ENCODE measurements at regions of chr12 and their contacts with region 1.

Region 1: DNA sequence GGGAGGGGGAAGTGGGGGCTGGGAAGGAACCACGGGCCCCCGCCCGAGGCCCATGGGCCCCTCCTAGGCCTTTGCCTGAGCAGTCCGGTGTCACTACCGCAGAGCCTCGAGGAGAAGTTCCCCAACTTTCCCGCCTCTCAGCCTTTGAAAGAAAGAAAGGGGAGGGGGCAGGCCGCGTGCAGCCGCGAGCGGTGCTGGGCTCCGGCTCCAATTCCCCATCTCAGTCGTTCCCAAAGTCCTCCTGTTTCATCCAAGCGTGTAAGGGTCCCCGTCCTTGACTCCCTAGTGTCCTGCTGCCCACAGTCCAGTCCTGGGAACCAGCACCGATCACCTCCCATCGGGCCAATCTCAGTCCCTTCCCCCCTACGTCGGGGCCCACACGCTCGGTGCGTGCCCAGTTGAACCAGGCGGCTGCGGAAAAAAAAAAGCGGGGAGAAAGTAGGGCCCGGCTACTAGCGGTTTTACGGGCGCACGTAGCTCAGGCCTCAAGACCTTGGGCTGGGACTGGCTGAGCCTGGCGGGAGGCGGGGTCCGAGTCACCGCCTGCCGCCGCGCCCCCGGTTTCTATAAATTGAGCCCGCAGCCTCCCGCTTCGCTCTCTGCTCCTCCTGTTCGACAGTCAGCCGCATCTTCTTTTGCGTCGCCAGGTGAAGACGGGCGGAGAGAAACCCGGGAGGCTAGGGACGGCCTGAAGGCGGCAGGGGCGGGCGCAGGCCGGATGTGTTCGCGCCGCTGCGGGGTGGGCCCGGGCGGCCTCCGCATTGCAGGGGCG is at the start of gene GAPDH:
- DNase-seq: peak; percentile 87 to 91
- H3K4me3 ChIP-seq: peak within 1 kb of the TSS; percentile 83 to 98 (median 90)
- H3K27ac ChIP-seq: peak within 1 kb of the TSS; percentile 98
- H3K4me1 ChIP-seq: peaks cover 0 to 19% (median 16%) of the 10 kb centered on the region in 4 experiments; a peak in 6 of 7 replicates
- H3K27me3 ChIP-seq: no peaks in the 10 kb centered on the region
- CTCF ChIP-seq: no peak; a peak in 1 of 4 replicates
- EP300 ChIP-seq: peak in 1 of 2 experiments; percentile 7; a peak in 1 of 3 replicates
- POLR2A ChIP-seq: peak in 1 of 2 experiments; percentile 85; a peak in 1 of 3 replicates
- RAD21 ChIP-seq: no peak
- total RNA-seq, gene GAPDH: 5,175 and 5,215 TPM in 2 replicates

Region 2: GRCh38 chr12:6423267-6424007 is 110.7 kb before region 1 on chr12:
- CTCF ChIA-PET with region 1: interaction called, 15 read pairs
- POLR2A ChIA-PET with region 1: interaction called, 38 read pairs
- DNase-seq: peak; percentile 70 to 77
- H3K4me3 ChIP-seq: no peak overlapping the region
- H3K27ac ChIP-seq: no peak overlapping the region
- H3K4me1 ChIP-seq: peaks cover 0 to 4% (median under 1%) of the 10 kb centered on the region in 4 experiments; a peak in 2 of 7 replicates
- H3K27me3 ChIP-seq: no peaks in the 10 kb centered on the region; a peak in 1 of 7 replicates
- CTCF ChIP-seq: peak; percentile 84 to 96 (median 95)
- EP300 ChIP-seq: no peak
- POLR2A ChIP-seq: no peak
- RAD21 ChIP-seq: peak; percentile 97 to 99

Region 3: DNA sequence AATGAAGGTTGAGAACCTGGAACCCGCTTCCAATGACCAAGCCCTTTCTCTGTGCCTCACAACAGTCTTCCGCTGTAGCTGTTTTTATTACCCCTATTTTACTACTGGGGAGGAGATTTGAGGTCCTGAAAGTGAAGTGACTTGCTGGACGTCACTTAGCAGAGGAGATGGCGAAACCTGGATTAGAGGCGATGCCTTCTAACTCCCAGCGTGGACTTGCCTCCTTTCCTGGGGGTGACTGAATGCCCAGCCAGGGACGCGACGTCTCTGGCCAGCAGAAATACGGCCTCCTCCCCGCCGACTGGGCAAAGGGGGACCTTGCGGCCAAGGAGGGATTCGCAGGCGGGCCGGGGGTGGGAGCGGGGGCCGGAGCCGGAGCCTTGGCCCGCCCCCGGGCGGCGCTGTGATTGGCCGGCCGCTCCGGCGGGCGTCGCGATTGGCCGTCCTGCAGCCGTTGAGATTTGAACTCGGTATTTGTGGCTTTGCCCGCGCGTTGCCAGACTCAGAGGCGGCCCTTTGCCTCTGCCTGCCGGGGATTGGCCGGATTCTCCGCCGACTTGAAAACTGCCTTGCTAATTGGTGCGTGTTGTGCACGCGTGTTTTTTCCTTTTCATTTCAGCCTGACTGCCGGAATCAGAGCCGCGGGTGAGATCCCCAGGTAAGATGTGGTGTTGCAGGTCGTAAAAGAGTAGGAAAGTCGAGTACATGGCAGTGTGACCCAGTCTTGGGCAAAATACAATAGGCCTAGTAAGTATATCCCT is 40.4 kb before region 1 on chr12 and contains the start of gene NCAPD2:
- CTCF ChIA-PET with region 1: interaction called, 6 read pairs
- POLR2A ChIA-PET with region 1: interaction called, 38 read pairs
- DNase-seq: peak; percentile 86 to 91
- H3K4me3 ChIP-seq: peak within 1 kb of the TSS; percentile 84 to 98 (median 90)
- H3K27ac ChIP-seq: peak within 1 kb of the TSS; percentile 81
- H3K4me1 ChIP-seq: peaks cover 0 to 6% (median 4%) of the 10 kb centered on the region in 4 experiments; a peak in 4 of 7 replicates
- H3K27me3 ChIP-seq: no peaks in the 10 kb centered on the region
- CTCF ChIP-seq: peak in 2 of 3 experiments; percentile 12 to 19; a peak in 2 of 4 replicates
- EP300 ChIP-seq: no peak
- POLR2A ChIP-seq: peak; percentile 72 to 76
- RAD21 ChIP-seq: no peak; a peak in 1 of 4 replicates
- total RNA-seq, gene NCAPD2: 129 and 132 TPM in 2 replicates

Region 4: GRCh38 chr12:6520186-6520585 is 13.9 kb before region 1 on chr12:
- CTCF ChIA-PET with region 1: interaction called, 43 read pairs
- POLR2A ChIA-PET with region 1: interaction called, 188 read pairs
- DNase-seq: no peak
- H3K4me3 ChIP-seq: no peak overlapping the region
- H3K27ac ChIP-seq: no peak overlapping the region
- H3K4me1 ChIP-seq: no peaks in the 10 kb centered on the region
- H3K27me3 ChIP-seq: no peaks in the 10 kb centered on the region
- CTCF ChIP-seq: no peak
- EP300 ChIP-seq: no peak
- POLR2A ChIP-seq: no peak
- RAD21 ChIP-seq: no peak

Region 5: DNA sequence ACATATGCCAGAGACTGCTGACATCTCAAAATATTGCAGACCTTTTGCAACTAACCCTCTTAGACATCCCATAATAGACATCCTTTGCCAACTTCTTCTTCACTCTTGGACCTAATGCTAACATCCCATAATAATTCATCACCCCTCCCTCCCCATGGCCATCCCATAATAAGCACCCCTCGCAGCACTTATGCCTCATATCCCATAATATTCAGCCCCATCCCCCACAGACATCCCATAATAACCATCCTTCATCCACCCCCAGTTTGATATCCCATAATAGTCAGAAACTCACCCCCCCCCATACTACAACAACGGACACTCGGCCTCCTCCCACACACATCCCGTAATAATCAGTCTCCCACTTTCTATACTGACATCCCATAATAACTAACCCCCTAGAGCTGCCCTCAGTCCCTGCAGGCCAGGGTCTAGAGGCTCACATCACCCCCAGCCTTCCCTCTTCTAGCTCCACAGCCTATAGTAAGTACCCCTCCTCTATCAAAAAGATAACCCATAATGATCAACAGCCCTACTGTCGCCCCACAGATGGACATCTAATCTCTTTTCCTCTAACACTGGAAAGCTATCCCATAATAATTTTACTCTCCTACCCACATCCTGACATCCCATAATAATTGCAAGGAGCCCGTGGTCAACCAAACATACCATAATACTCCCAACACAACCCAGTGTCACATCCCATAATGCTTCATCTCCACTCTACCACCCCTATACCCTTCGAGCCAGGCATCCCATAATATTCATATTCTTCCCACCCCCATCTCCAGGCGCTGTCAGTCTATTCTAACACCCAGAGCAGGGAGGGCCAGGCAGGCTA is 73.9 kb after region 1 on chr12:
- CTCF ChIA-PET with region 1: interaction called, 8 read pairs
- POLR2A ChIA-PET with region 1: interaction called, 60 read pairs
- DNase-seq: no peak
- H3K4me3 ChIP-seq: peak overlapping the region in 1 of 4 experiments; percentile 17; a peak in 3 of 8 replicates
- H3K27ac ChIP-seq: no peak overlapping the region
- H3K4me1 ChIP-seq: peaks cover 17 to 34% (median 23%) of the 10 kb centered on the region in 4 experiments
- H3K27me3 ChIP-seq: no peaks in the 10 kb centered on the region
- CTCF ChIP-seq: no peak
- EP300 ChIP-seq: no peak
- POLR2A ChIP-seq: no peak
- RAD21 ChIP-seq: no peak

Region 6: GRCh38 chr12:6851921-6852650 is 318.0 kb after region 1 on chr12 and contains the start of gene USP5:
- CTCF ChIA-PET with region 1: no interaction called
- POLR2A ChIA-PET with region 1: interaction called, 17 read pairs
- DNase-seq: peak; percentile 94 to 99
- H3K4me3 ChIP-seq: peak within 1 kb of the TSS; percentile 79 to 94 (median 88)
- H3K27ac ChIP-seq: peak within 1 kb of the TSS; percentile 77; the same call in 1 of the 2 replicates
- H3K4me1 ChIP-seq: peaks cover 0 to 14% (median 3%) of the 10 kb centered on the region in 4 experiments; a peak in 5 of 7 replicates
- H3K27me3 ChIP-seq: no peaks in the 10 kb centered on the region
- CTCF ChIP-seq: no peak
- EP300 ChIP-seq: no peak
- POLR2A ChIP-seq: peak in 1 of 2 experiments; percentile 79; a peak in 2 of 3 replicates
- RAD21 ChIP-seq: no peak
- total RNA-seq, gene USP5: 148 and 159 TPM in 2 replicates

Region 7: GRCh38 chr12:6934110-6934509 is 400.0 kb after region 1 on chr12:
- CTCF ChIA-PET with region 1: no interaction called
- POLR2A ChIA-PET with region 1: no interaction called
- DNase-seq: no peak
- H3K4me3 ChIP-seq: no peak overlapping the region
- H3K27ac ChIP-seq: no peak overlapping the region
- H3K4me1 ChIP-seq: peaks cover 0 to 15% (median 8%) of the 10 kb centered on the region in 4 experiments; a peak in 6 of 7 replicates
- H3K27me3 ChIP-seq: no peaks in the 10 kb centered on the region
- CTCF ChIP-seq: no peak
- EP300 ChIP-seq: no peak
- POLR2A ChIP-seq: no peak
- RAD21 ChIP-seq: no peak